ENCODE measurements at regions of chr6 and their contacts with region 1.

Region 1: DNA sequence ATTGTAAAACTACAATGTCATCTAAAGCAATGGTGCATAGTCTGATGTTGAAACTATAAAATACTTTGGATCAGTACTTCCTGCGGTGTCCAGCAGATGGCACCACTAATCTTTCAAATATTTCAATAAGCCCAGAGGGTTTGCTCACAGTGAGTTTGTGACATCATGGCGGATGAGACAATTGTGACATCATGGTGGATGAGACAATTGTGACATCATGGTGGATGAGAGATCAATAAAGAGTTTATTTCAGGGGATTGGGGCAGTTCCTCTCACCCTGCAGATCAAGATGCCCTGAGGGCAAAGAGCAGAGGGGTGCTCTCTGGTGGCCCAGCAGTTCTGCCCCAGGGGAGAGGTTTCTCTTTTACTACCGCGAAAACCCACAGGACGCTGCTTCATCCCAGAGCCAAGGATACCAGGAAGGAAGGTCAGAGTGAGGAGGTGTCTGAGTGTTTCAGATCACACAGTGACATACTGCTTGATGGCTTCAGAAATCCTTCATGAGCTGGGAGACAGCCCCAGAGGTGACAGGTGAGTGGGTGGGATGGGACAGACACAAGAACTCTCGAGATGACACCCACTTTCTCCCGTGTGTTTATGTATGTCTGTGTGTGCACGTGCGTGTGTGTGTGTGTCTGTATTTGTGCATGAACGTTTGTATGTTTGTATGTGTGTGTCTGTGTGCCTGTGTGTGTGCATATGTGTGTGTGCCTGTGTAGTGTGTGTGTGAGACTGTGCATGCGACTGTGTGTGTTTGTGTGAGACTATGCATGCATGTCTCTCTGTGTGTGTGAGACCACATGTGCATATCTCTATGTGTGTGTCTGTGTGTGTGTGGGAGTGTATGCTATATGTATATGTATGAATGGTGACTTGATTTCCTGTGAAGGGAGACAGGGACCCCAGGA is 7.3 kb upstream of the ULBP2 start:
- DNase-seq: peak in 8 of 9 donors; percentile 50 to 76 (median 70)
- ATAC-seq: peak; percentile 76
- H3K4me3 ChIP-seq: no peak overlapping the region
- H3K4me3 Mint-ChIP-seq: peak overlapping the region in 1 of 10 donors; percentile 41
- H3K27ac ChIP-seq: no peak overlapping the region
- H3K27ac Mint-ChIP-seq: peak overlapping the region in 4 of 9 donors; percentile 2 to 39 (median 28)
- H3K4me1 ChIP-seq: peaks cover 12 to 14% of the 10 kb centered on the region in 2 donors
- H3K4me1 Mint-ChIP-seq: peaks cover 6 to 28% (median 19%) of the 10 kb centered on the region in 7 donors
- H3K27me3 ChIP-seq: peaks cover 26 to 58% of the 10 kb centered on the region in 2 donors
- H3K27me3 Mint-ChIP-seq: peaks cover 81 to 91% (median 87%) of the 10 kb centered on the region in 5 donors

Region 2: GRCh38 chr6:150016324-150017185 is 82.1 kb after region 1 on chr6:
- CTCF ChIA-PET with region 1: interaction called, 13 read pairs
- POLR2A ChIA-PET with region 1: no interaction called
- intact Hi-C with region 1: loop called (anchors 1 kb)
- DNase-seq: peak in 8 of 9 donors; percentile 38 to 77 (median 68)
- ATAC-seq: peak; percentile 85
- H3K4me3 ChIP-seq: no peak overlapping the region
- H3K4me3 Mint-ChIP-seq: no peak overlapping the region
- H3K27ac ChIP-seq: no peak overlapping the region
- H3K27ac Mint-ChIP-seq: peak overlapping the region in 1 of 9 donors; percentile 1
- H3K4me1 ChIP-seq: peaks cover 0 to 2% of the 10 kb centered on the region in 2 donors
- H3K4me1 Mint-ChIP-seq: peaks cover 10 to 23% (median 15%) of the 10 kb centered on the region in 7 donors
- H3K27me3 ChIP-seq: peaks cover 11 to 16% of the 10 kb centered on the region in 2 donors
- H3K27me3 Mint-ChIP-seq: peaks cover 60 to 80% (median 66%) of the 10 kb centered on the region in 5 donors

Region 3: DNA sequence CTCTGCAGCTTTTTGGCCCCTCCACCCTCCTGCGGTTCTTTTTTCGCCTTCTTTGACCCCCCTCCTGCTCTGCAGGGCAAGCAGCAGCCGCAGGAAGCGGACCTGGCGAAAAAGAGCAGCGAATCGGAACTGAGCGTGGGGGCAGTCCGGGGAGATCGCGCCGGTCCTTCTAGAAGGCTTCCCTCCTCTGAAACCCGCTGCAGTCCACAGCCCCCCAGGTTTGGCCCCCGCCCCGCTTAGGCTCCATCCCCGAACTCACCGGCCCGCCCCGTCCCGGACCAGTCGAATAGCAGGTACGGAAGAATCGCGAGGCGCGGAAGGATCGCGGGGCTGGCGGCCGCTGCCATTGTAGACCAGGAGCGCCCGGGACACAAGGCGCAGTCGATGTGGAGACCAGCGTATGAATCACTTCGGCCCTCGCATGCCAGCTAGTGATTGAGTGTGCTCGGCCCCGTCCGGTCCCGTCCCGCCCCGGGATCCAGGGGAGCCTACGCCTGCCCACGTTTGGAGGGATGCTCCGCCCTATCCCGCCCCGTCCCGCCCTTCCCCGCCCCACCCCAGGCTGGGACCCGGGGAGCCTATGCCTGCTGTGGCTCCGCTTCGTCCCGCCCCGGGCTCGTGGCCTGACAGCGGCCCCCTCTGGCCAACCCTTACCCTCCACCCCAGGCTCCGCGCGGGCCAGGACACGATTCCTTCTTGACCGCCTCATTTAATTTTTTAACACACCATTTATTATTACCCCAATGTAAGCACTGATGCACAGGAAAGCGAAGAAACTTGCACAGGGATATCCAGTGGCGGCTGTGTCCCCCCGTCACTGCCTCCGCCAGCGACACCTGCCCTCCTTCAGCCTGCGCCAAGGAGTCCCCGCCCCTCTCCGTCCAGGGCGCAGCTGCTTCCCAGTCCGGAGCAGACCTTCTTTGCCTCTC is 134.5 kb after region 1 on chr6 and contains the start of gene ULBP3:
- CTCF ChIA-PET with region 1: no interaction called
- POLR2A ChIA-PET with region 1: no interaction called
- intact Hi-C with region 1: loop called (anchors 2 to 5 kb)
- DNase-seq: peak; percentile 24 to 75 (median 35)
- ATAC-seq: peak; percentile 83
- H3K4me3 ChIP-seq: peak within 1 kb of the TSS; percentile 77
- H3K4me3 Mint-ChIP-seq: peak within 1 kb of the TSS; percentile 80 to 95 (median 90)
- H3K27ac ChIP-seq: no peak within 1 kb of the TSS
- H3K27ac Mint-ChIP-seq: peak within 1 kb of the TSS in 4 of 9 donors; percentile 49 to 82 (median 72)
- H3K4me1 ChIP-seq: peaks cover 0 to 5% of the 10 kb centered on the region in 2 donors
- H3K4me1 Mint-ChIP-seq: peaks cover 10 to 22% (median 14%) of the 10 kb centered on the region in 7 donors
- H3K27me3 ChIP-seq: no peaks in the 10 kb centered on the region
- H3K27me3 Mint-ChIP-seq: peaks cover 4 to 35% (median 12%) of the 10 kb centered on the region in 5 donors
- total RNA-seq, gene ULBP3: 0.42 to 1.5 TPM in 2 of 5 experiments, not detected in the others

Region 4: GRCh38 chr6:150334790-150335783 is 400.6 kb after region 1 on chr6:
- CTCF ChIA-PET with region 1: no interaction called
- POLR2A ChIA-PET with region 1: no interaction called
- intact Hi-C with region 1: loop called in 1 of 2 experiments (anchors 10 kb)
- DNase-seq: peak in 1 of 9 donors; percentile 11
- ATAC-seq: no peak
- H3K4me3 ChIP-seq: no peak overlapping the region
- H3K4me3 Mint-ChIP-seq: no peak overlapping the region
- H3K27ac ChIP-seq: no peak overlapping the region
- H3K27ac Mint-ChIP-seq: no peak overlapping the region
- H3K4me1 ChIP-seq: no peaks in the 10 kb centered on the region
- H3K4me1 Mint-ChIP-seq: no peaks in the 10 kb centered on the region
- H3K27me3 ChIP-seq: no peaks in the 10 kb centered on the region
- H3K27me3 Mint-ChIP-seq: peaks cover 0 to 22% (median 7%) of the 10 kb centered on the region in 5 donors

Region 5: DNA sequence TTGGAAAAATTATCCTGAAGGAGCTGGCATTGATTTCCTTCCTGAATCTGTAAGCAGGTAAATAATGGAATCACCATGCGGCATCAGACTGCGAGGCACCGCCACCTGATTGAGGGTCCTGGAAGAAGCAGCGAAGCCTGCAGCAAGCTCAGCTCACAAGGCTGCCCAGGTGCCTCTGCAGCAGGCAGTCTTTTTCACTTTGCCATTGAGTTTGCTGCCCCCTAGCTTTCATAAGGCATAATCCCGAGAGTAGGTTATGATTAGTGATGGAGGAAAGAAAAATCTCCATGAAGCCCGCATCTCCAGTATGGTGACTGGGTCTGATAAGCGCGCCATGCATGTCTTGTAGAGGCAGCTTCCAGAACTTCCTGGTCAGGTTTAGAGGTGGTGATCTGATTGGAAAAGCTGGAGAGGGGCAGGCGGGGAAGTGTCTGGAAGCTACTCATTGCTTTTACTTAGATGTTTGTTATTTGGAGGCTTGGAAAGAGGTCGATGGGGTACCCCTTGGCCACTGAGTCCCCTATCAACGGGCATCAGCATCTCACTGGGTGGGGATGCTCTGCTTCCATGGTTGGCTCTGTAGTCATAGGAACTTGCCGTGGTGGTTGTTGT is 461.0 kb after region 1 on chr6:
- CTCF ChIA-PET with region 1: no interaction called
- POLR2A ChIA-PET with region 1: no interaction called
- intact Hi-C with region 1: loop called (anchors 10 kb)
- DNase-seq: peak in 4 of 9 donors; percentile 14 to 27 (median 19)
- ATAC-seq: peak; percentile 66
- H3K4me3 ChIP-seq: no peak overlapping the region
- H3K4me3 Mint-ChIP-seq: no peak overlapping the region
- H3K27ac ChIP-seq: no peak overlapping the region
- H3K27ac Mint-ChIP-seq: no peak overlapping the region
- H3K4me1 ChIP-seq: no peaks in the 10 kb centered on the region
- H3K4me1 Mint-ChIP-seq: peaks cover 0 to 2% (median 0%) of the 10 kb centered on the region in 7 donors
- H3K27me3 ChIP-seq: no peaks in the 10 kb centered on the region
- H3K27me3 Mint-ChIP-seq: peaks cover 0 to 14% (median 11%) of the 10 kb centered on the region in 5 donors

Measured in naive thymus-derived CD4-positive, alpha-beta T cell (primary cell).